Activated T-helper 2 cell treated with anti-CD3 and anti-CD28 coated beads, Interferon-gamma antibody, Interleukin-2, Interleukin-4, amounts not matched to agents 10 μg/mL and 5 μg/mL and 100 μg/mL, durations not matched to agents 14 hours and 24 hours and 36 hours (primary cell): ENCODE measurements at regions of chr5 and their contacts with region 1.

Region 1: DNA sequence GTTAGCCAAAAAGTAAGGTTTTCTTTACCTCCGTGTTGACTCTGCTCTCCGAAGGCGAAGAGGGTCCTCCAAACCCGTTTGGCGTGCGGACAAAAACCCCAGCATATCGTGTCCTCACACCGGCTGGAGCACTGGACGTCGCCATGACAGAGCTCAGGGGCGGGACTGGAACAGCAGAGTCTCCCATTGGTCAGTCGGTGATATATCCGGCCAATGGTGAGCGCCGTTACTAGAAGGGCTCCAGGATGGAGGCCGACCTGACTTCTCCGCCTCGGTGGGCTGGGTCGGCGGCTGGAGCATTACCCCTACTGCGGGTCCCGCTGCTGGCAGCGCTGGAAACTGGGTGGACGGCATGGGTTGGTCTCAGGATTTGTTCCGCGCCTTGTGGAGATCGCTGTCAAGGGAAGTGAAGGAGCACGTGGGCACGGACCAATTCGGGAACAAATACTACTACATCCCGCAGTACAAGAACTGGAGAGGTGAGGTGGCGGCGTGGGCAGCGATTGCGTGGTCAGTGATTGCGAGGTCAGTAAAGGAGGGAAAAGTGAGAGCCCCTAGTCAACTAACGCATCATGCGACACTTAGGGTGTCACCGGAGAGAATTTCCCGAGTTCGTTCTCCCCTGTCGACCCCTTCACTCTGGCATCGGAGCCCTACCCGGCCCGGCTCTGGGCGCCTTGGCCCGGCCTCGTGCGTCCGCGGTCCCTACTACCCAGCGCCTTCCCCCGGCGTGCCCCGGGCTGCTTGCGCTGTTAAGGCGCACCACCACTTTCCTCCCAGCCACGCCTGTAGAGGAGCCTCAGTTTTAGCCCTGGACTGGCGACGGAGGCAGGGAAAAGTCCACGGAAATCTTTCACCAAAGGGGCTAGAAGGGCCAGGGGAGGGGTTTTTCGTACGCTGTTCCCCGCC is at the starts of genes ERCC8 and NDUFAF2:
- DNase-seq: peak; percentile 85
- H3K4me3 Mint-ChIP-seq: no peak within 1 kb of the TSS
- H3K27ac Mint-ChIP-seq: peak within 1 kb of the TSS; percentile 75
- H3K4me1 Mint-ChIP-seq: peaks cover 19% of the 10 kb centered on the region
- H3K27me3 Mint-ChIP-seq: no peaks in the 10 kb centered on the region
- total RNA-seq, gene ERCC8: 9.3 and 10.2 TPM in 2 replicates
- total RNA-seq, gene NDUFAF2: 32.6 and 39.8 TPM in 2 replicates

Region 2: DNA sequence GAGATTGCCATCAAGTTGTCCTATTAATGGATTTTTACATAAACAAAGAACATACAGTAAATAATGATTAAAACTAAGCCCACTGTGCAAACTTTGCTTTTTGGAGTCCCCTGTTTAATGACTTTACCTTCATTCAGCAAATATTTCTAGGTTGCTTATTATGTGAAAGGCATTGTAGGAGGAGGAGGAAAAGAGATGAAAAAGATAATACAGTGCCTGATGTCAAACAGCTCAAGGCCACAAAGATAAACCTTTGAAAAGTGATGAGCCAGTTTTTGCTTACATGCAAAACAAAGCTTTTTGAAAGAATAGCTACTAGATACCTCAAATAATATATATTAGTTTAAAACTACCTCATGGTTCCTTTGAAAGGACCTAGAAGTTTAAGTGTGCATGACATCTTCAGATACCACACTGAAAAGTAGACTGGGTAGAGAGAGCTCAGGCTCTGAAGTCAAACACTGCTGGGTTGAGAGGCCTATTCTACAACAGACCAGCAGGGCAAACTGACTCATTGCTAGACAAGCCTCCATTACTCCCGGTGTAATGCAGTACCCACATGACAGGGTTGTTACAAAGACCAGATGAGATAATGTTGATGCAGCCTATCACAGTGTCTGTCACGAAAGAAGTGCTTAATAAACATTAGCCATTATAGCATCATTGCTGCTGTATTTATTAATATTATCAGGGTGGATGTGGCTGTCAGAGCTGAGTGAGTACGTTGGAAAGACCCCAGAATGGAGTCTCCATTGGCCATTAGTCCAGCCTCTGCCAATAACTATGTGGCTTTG is 257.0 kb before region 1 on chr5:
- intact Hi-C with region 1: loop called (anchors 10 kb)
- DNase-seq: no peak
- H3K4me3 Mint-ChIP-seq: no peak overlapping the region
- H3K27ac Mint-ChIP-seq: peak overlapping the region; percentile 39
- H3K4me1 Mint-ChIP-seq: peaks cover 27% of the 10 kb centered on the region
- H3K27me3 Mint-ChIP-seq: no peaks in the 10 kb centered on the region

Region 3: DNA sequence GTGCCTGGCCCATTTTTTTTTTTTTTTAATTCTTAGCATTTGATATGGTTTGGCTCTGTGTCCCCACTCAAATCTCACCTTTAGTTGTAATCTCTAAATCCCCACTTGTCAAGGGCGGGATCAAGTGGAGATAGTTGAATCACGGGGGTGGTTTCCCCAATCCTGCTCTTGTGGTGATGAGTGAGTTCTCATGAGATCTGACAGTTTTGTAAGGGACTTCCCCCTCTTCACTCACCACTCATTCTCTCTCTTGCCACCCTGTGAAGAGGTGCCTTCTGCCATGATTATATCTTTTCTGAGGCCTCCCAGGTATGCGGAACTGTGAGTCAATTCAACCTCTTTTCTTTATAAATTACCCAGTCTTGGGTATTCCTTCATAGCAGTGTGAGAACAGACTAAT is 27.1 kb after region 1 on chr5:
- intact Hi-C with region 1: loop called (anchors 1 kb)
- DNase-seq: no peak
- H3K4me3 Mint-ChIP-seq: no peak overlapping the region
- H3K27ac Mint-ChIP-seq: no peak overlapping the region
- H3K4me1 Mint-ChIP-seq: peaks cover 4% of the 10 kb centered on the region
- H3K27me3 Mint-ChIP-seq: no peaks in the 10 kb centered on the region